Dorsolateral prefrontal cortex (tissue), 120 donors: ENCODE measurements at regions of chr9 and their contacts with region 1.

Region 1: GRCh38 chr9:18473652-18474279 is at the start of gene ADAMTSL1:
- DNase-seq: peak in 8 of 10 donors; percentile 6 to 49 (median 40)
- H3K4me3 ChIP-seq: peak within 1 kb of the TSS in 58 of 59 donors; percentile 13 to 67 (median 40)
- H3K27ac ChIP-seq: no peak within 1 kb of the TSS
- H3K27me3 ChIP-seq: peaks cover 0 to 6% (median 0%) of the 10 kb centered on the region in 45 donors
- CTCF ChIP-seq: no peak
- total RNA-seq, gene ADAMTSL1: 1.8 to 12.6 (median 4.7) TPM

Region 2: DNA sequence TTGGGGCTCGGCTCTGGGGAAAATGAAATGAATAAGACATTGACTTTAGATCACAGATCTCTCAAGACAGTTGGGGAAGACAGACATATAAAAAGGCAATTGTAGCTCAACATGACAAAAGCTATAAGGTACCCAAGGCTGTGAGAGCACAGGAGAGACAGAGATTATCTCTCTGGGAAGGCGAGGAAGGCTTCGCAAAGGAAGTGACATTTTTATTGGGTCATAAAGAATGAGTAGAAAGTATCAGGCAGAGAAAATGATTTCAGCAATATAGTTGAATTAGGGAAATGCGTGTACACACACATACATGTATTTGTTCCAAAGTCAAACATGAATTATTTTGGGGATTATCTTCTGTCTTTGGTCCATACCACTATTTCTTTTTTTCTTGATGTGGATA is 381.6 kb before region 1 on chr9:
- intact Hi-C with region 1: no loop called
- DNase-seq: no peak
- H3K4me3 ChIP-seq: no peak overlapping the region
- H3K27ac ChIP-seq: no peak overlapping the region
- H3K27me3 ChIP-seq: no peaks in the 10 kb centered on the region
- CTCF ChIP-seq: no peak

Region 3: GRCh38 chr9:18580151-18580550 is 106.4 kb after region 1 on chr9:
- intact Hi-C with region 1: no loop called
- DNase-seq: no peak
- H3K4me3 ChIP-seq: no peak overlapping the region
- H3K27ac ChIP-seq: no peak overlapping the region
- H3K27me3 ChIP-seq: no peaks in the 10 kb centered on the region
- CTCF ChIP-seq: no peak

Region 4: GRCh38 chr9:18605766-18606180 is 132.0 kb after region 1 on chr9:
- intact Hi-C with region 1: loop called (anchors 10 kb)
- DNase-seq: no peak
- H3K4me3 ChIP-seq: no peak overlapping the region
- H3K27ac ChIP-seq: peak overlapping the region in 9 of 59 donors; percentile 15 to 53 (median 29)
- H3K27me3 ChIP-seq: no peaks in the 10 kb centered on the region
- CTCF ChIP-seq: no peak

Region 5: DNA sequence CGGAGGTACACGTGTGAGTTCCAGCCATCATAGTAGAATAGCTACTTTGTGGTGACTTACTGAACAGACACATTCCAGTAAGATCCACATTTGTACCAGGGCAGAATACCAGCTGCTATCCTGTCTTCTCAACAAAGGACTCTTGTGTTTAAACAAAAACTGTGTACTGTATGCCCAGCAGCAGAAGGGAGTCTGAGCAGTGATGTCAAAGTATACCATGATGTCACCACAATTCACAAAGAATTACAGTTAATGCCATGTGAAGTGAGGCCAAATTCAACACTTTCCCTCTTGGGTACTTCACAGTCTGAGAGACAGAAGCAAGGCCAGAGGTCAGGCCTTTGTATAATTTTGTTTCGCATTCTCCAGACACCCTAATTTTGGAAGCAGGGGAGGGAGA is 137.2 kb after region 1 on chr9:
- intact Hi-C with region 1: loop called (anchors 10 kb)
- DNase-seq: peak in 2 of 10 donors; percentile 26 to 27
- H3K4me3 ChIP-seq: peak overlapping the region in 3 of 59 donors; percentile 20 to 29 (median 26)
- H3K27ac ChIP-seq: peak overlapping the region in 3 of 59 donors; percentile 22 to 41 (median 22)
- H3K27me3 ChIP-seq: no peaks in the 10 kb centered on the region
- CTCF ChIP-seq: peak in 4 of 56 donors; percentile 8 to 18 (median 14)